AG04449 (cell line): ENCODE measurements at regions of chr2 and their contacts with region 1.

Region 1: DNA sequence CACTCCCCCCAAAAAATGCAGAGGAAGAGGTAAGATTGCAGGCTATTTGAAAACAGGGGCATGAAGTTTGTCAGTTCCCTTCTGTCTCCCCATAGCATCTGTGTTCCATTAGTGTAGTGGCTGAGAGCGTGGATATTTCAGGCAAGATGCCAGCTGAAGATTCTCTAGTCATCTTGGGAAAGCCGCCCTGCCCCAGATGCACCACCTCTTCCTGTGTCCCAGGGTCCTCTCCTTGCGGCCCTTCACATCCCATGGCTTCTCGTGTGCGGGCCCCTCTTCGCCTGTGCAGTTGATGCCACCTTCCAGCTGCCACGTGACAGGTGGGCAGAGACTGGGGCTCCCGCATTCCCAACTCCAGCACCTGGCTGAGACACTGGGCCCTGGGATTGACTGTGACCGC is 16.1 kb downstream of the TMEM127 start:
- DNase-seq: peak; percentile 38
- H3K4me3 ChIP-seq: no peak overlapping the region
- CTCF ChIP-seq: no peak

Region 2: DNA sequence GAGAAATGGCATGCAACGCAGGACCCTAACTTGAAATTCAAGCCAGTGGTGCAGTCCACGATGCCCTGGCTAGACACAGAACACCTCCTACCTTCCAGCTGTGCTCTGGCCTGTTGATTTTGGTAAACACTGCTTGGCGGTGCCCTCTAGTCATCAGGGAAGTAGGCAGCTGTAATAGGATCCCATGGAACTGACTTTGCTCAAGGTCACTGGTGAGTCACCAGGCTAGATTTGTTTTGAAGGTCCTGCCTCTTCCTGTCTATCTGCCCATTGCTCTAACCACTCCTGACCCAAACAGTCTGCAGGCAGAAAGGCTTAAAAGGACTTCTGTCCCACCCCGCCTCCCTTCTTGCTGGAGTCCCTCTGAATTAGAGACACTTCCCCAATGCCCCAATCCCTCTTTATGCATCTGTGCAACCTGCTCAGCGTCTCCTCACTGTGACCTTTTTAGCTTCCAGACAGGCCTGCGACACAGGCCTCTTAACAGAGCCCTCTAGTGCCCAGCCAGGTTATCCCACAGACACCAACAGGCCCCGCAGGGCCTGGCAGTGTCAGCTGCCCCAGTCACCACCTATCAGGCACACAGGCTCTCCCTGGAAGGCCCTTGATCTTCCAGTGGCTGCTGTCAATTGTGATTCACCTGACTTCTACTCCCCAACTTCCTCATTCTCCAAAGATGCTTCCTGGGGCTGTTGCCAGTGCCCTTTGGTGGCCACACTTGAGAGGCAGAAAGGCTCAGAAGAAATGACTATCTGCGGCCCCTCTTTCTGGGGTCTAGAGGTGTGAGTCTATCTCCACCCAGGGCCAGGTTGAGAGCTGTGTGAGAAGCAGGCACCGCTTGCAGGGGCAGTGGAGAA is 11.0 kb after region 1 on chr2:
- CTCF ChIA-PET with region 1: interaction called, 16 read pairs
- POLR2A ChIA-PET with region 1: no interaction called
- DNase-seq: peak; percentile 37
- H3K4me3 ChIP-seq: no peak overlapping the region
- CTCF ChIP-seq: peak; percentile 27